Esophagus squamous epithelium (tissue), 5 donors: ENCODE measurements at regions of chr1 and their contacts with region 1.

Region 1: DNA sequence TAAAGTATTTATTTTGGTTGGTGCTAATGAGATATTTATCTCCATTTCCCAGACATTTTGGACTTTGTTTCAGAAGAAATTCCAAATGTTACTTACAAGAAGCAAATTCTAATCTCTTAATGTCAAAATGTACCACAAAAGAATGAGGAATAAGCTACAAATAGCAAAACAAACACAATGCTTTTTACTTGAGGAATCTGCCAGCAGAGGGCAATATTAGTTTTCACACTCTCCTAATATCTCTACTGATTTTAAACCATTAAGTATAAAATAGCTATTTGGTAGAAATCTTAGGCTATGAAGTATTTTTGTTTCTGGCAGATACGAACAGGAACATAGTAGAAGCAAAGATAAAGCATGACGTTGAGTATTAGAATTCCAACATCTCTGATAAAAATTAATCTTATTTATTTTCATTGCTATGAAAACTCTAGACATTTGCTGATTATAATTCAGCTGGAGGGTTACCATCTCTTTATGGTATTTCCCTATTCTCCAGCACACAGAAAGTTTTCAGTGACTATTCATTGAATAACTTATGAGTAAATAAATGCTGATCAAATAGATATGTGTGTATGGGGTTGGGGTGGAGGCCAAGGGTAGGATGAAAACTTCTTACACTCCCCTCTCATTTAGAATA is 13.4 kb upstream of the HMCN1 start:
- DNase-seq: no peak
- H3K4me3 ChIP-seq: no peak overlapping the region
- H3K27ac ChIP-seq: no peak overlapping the region
- H3K4me1 ChIP-seq: peaks cover 0 to 24% (median 4%) of the 10 kb centered on the region in 3 donors
- H3K27me3 ChIP-seq: no peaks in the 10 kb centered on the region
- CTCF ChIP-seq: peak in 5 of 6 experiments; percentile 34 to 64 (median 51)
- POLR2A ChIP-seq: no peak

Region 2: GRCh38 chr1:185853739-185854138 is 133.0 kb after region 1 on chr1:
- intact Hi-C with region 1: loop called (anchors 10 kb)
- DNase-seq: no peak
- H3K4me3 ChIP-seq: no peak overlapping the region
- H3K27ac ChIP-seq: no peak overlapping the region
- H3K4me1 ChIP-seq: peaks cover 0 to 28% (median 7%) of the 10 kb centered on the region in 3 donors
- H3K27me3 ChIP-seq: no peaks in the 10 kb centered on the region
- CTCF ChIP-seq: no peak
- POLR2A ChIP-seq: no peak